ENCODE measurements at regions of chr16 and their contacts with region 1.

Region 1: GRCh38 chr16:67806428-67807147 is at the starts of genes RANBP10 and TSNAXIP1:
- DNase-seq: peak; percentile 100
- H3K4me3 ChIP-seq: peak within 1 kb of the TSS; percentile 78
- H3K27ac ChIP-seq: peak within 1 kb of the TSS; percentile 83
- H3K4me1 ChIP-seq: peaks cover 14% of the 10 kb centered on the region
- H3K27me3 ChIP-seq: no peaks in the 10 kb centered on the region
- CTCF ChIP-seq: no peak
- total RNA-seq, gene RANBP10: 27.1 and 28.0 TPM in 2 replicates
- total RNA-seq, gene TSNAXIP1: 1.0 and 1.6 TPM in 2 replicates

Region 2: DNA sequence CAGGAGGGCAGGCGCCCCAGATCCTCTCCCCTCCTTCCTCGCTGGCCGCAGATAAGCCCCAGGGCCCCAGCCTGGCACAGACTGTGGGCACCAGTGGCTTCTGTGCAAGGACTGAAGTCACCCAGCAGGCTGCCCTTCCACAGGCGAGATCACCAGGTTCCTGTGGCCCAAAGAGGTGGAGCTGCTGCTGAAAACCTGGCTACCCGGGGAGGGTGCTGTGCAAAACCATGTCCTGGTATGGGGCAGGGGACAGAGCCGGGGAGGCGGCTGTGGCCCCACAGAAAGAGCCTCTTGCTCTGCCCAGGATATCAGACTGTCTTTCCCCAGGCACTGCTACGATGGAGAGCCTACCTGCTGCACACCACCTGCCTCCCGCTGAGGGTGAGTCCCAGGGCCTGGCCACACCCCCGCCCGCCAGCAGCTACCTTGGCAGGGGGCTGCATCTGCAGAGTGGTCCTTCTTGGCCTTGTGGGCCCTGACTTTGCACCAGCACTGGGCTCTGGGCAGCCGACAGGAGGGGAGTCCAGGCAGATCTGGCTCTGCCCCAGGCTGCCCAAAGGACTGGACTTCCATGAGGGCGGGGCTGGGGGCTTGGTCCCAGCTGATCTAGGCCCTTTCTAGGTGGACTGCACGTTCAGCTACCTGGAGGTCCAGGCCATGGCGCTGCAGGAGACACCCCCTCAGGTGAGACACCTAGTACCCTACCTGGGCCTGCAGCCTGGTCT is 161.0 kb before region 1 on chr16:
- CTCF ChIA-PET with region 1: no interaction called
- POLR2A ChIA-PET with region 1: interaction called, 16 read pairs
- intact Hi-C with region 1: no loop called
- DNase-seq: no peak
- H3K4me3 ChIP-seq: peak overlapping the region; percentile 45
- H3K27ac ChIP-seq: no peak overlapping the region
- H3K4me1 ChIP-seq: no peaks in the 10 kb centered on the region
- H3K27me3 ChIP-seq: peaks cover 40% of the 10 kb centered on the region
- CTCF ChIP-seq: no peak

Region 3: DNA sequence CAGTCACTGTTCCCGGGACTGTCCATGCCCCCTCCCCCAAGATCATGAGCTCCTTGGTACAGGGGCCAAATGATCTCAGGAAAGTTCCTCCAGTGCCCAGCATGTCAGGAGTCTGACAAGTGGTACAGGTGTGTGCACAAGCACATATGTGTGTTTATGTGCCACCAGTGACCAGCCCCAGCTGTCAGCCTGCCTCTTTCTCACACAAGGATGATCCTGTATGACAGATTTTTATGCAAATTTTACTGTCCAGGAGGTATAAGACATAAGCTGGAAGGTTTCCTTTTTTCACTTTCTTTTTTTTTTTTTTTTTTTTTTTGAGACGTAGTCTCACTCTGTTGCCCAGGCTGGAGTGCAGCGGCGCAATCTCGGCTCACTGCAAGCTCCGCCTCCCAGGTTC is 56.1 kb before region 1 on chr16:
- CTCF ChIA-PET with region 1: no interaction called
- POLR2A ChIA-PET with region 1: interaction called, 21 read pairs
- intact Hi-C with region 1: no loop called
- DNase-seq: no peak
- H3K4me3 ChIP-seq: no peak overlapping the region
- H3K27ac ChIP-seq: no peak overlapping the region
- H3K4me1 ChIP-seq: no peaks in the 10 kb centered on the region
- H3K27me3 ChIP-seq: no peaks in the 10 kb centered on the region
- CTCF ChIP-seq: no peak

Region 4: DNA sequence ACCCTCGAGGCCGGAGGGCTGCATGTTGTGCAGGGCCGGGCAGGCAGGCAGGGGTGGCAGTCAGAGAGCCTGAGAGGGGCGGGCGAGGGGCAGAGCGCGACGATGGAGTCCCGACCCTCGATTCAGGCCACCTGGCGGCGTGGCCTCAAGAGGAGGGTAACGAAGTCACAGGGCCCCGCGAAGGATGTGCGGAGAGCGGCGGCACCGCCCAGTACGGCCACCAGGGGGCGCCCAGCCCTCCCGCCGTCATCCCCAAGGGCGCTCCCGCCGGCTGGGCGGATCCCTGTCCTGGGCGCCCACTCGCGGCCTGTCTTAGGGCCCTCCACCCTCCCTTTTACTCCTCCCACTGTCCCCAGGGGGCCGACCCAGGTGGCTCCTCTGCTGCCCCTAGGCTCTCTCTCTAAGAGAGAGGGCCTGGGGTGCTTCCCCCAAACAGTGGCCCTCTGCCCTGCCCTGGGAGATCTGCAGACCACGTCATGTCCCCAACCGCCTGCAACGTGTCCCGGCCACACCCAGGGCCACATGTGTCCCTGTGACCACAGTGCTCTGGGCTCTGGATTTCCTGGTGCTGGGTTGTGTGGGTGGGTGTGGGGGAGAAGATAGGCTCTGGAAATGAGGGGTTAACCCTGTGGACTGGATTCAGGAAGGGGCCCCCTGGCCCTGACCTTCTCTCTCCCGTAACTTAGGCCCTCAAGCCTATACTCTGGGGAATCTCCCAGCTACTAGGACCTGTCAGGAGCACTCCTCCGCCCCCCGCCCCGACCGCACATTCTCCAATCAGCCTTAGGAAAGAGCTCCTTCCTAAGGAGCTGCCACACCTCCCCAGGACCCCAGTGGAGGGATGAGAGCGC is 186.8 kb after region 1 on chr16:
- CTCF ChIA-PET with region 1: no interaction called
- POLR2A ChIA-PET with region 1: no interaction called
- intact Hi-C with region 1: no loop called
- DNase-seq: peak; percentile 82
- H3K4me3 ChIP-seq: no peak overlapping the region
- H3K27ac ChIP-seq: no peak overlapping the region
- H3K4me1 ChIP-seq: peaks cover 5% of the 10 kb centered on the region
- H3K27me3 ChIP-seq: no peaks in the 10 kb centered on the region
- CTCF ChIP-seq: peak; percentile 98

Region 5: DNA sequence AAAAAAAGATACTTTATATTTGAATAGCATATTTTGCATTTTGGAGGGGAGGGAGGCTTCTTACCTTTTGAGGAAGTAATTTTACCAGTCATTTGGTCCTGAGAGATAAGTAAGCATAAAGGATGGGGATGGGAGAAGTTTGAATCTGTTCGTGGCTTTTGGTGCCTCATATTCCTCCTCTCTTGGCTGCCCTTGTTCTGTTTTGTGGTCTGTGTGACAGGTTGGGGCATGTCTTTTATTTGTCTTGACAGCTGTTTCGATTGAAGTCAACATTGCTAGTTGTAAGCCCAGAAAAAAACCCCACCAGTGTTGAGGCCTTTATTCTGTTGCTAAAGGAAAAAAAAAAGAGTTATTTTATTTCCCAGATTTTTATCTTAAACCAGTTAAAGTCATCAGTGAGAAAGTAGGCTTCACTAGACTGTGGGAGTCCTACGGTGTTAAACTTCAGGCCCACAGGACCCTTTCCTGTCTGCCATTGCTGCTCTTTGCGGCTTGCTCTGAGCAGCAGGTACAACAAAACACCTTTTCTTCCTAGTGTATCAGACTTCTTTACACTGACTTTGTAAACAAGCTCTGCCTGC is 469.1 kb after region 1 on chr16:
- CTCF ChIA-PET with region 1: no interaction called
- POLR2A ChIA-PET with region 1: no interaction called
- intact Hi-C with region 1: no loop called
- DNase-seq: no peak
- H3K4me3 ChIP-seq: no peak overlapping the region
- H3K27ac ChIP-seq: no peak overlapping the region
- H3K4me1 ChIP-seq: no peaks in the 10 kb centered on the region
- H3K27me3 ChIP-seq: no peaks in the 10 kb centered on the region
- CTCF ChIP-seq: no peak

Measured in A673 (cell line).